ENCODE measurements at regions of chr9 and their contacts with region 1.

Region 1: DNA sequence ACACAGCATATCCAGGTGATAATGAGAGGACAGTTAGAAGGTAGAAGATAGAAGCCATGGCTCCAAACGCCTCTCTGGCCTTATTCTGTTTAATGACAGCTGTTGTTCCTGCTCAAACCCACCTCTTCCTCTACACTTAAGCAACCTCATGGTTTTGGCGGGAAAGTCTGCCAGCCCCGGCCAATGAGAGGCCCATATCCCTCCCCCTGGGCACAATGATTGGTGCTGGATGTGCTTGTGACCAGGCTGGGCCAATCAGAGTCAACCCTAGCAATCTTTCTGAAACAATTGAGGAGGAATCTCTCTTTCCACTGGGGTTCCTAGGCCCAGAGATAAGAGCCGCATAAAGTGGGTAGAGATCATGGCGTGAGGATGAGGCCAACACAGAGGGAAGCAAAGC is 4.8 kb upstream of the GFI1B start:
- DNase-seq: peak; percentile 51
- ATAC-seq: peak; percentile 64
- H3K4me3 Mint-ChIP-seq: no peak overlapping the region
- H3K27ac Mint-ChIP-seq: no peak overlapping the region
- H3K4me1 Mint-ChIP-seq: peaks cover 4% of the 10 kb centered on the region
- H3K27me3 Mint-ChIP-seq: peaks cover 18% of the 10 kb centered on the region

Region 2: DNA sequence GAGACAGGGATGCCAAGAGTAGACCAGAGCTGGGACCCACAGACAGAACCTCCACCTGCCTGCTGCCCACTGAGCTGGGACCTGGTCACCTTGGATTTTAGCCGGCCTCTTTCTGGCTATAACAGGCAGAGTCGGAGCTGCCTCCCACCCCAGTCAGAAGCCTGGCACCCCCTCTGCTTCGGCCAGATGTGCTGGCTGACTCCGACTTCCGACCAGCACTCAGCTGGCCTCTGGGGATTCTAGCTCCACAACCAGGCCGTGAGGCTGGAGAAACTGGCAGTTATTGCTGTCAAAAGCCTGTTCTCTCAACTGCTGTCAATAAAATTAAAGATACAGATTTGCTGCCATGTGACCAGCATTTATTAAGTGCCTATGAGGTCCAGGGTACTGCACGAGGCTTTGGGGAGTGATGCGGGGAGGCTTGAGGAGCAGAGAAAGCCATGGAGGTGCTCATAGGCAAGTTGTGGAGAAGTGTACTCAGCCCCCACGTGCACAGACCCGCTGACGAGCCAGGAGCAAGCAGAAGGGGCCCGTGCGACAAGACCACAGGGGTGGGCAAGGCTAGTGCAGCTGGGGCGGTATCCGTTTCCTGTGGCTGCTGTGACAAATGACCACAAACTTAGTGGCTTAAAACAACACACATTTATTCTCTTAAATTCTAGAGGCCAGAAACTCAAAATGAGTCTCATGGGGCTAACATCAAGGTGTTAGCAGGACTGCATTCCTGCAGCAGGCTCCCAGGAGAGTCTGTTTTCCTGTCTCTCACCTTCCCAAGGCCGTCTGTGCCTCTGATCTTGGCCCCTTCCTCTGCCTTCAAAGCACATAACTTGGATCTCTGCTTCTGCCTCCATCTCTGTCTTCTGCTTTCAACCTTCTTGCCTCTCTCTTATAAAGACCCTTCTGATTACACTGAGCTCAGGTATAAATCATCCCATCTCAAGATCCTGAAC is 17.9 kb after region 1 on chr9:
- CTCF ChIA-PET with region 1: interaction called, 11 read pairs
- POLR2A ChIA-PET with region 1: no interaction called
- intact Hi-C with region 1: no loop called
- DNase-seq: no peak
- ATAC-seq: no peak
- H3K4me3 Mint-ChIP-seq: no peak overlapping the region
- H3K27ac Mint-ChIP-seq: no peak overlapping the region
- H3K4me1 Mint-ChIP-seq: no peaks in the 10 kb centered on the region
- H3K27me3 Mint-ChIP-seq: peaks cover 26% of the 10 kb centered on the region

Measured in activated CD4-positive, alpha-beta T cell treated with anti-CD3 and anti-CD28 coated beads for 36 hours (primary cell).